ENCODE measurements at regions of chr21 and their contacts with region 1.

Region 1: GRCh38 chr21:42117229-42117966 is 46.3 kb downstream of the UMODL1 start:
- DNase-seq: peak; percentile 74
- ATAC-seq: peak; percentile 84 to 86

Region 2: DNA sequence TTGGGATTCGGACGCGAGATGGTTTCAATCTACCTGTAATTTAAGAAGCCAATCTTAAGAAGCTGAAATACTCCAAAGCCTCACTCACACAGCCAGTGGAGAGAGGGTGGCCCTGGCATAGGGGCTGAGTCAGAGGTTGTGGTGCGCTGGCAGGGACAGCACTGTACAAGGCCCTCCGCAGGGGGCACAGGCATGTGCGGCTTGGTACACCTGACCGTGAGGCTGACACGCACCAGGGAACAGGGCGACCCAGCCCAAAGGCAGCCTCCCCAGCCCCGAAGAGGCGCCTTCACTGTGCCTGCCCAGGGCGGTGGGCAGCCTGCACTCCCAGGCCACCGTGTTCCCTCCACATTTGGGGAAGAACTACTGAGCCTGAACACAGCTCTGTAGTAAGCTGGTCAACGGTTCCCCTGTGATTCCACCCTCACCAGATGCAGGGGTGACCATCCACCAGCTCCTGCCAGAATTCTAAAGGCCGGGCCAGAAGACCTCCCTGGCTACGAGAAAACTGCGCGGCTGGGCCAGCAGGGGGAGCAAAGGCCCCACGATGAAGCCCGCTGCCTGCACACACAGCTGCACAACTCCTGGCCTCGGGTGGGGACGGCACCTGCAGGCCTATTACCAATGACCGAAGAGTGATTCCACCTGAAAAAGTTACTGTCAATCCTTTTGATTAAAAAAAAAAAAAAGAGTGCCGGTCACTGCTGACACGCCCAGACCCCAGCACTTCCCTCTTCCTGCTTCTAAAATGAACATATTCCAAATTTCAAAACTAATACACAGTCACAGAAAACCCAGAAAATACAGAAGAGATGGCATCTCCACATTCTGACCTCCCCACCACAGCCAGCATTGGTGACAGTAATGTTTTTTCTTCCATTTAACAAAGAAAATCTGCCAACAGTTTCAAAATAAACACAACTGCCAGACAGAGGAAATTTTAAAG is 300.9 kb before region 1 on chr21:
- intact Hi-C with region 1: loop called (anchors 2 to 5 kb)
- DNase-seq: peak; percentile 66
- ATAC-seq: peak; percentile 87 to 89